Activated CD8-positive, alpha-beta T cell treated with anti-CD3 and anti-CD28 coated beads for 36 hours (primary cell): ENCODE measurements at regions of chr3 and their contacts with region 1.

Region 1: DNA sequence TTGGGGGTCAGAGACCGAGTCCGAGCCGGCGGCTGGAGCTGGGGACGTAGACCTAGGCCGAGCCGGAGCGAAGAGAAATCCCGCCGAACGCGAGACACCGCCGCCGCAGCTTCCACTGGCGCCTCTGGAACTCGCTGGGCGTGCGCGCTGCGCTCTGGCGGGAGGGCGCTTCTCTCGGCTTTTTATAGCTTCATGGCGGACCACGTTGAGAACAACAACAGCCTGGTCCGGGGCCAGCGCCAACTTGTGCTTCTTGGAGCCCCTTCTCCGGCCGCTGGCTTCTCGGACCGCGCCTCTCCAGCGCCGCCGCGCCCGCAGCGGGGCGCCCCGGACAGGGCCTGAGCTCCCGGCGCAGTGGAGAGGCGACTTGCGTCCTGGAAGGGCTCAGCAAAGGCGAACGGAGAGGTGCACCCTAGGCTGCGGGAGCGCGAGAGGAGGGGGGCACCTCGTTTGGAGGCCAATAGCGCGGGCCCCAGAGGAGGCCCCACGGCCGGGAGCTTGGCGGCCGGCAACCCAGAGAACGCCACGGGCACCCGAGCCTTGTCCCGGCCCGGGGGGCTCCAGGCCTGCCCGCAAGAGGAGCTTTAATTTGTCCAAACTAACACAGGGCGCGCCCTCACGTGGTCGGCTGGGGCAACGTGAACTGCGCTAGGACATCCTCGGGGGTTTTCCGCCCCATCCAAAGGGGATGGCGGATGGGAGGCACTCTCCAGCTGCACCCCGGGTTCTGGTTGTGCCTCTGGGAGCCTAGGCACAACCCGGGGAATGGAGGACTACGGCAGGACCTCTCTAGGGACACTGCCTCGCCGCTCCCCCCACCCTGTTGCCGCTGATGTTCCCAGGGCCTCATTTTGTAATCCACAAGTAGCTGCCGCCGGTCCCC is 37.7 kb downstream of the HMCES start:
- DNase-seq: peak; percentile 86
- ATAC-seq: peak; percentile 34
- H3K4me3 Mint-ChIP-seq: peak overlapping the region; percentile 80
- H3K27ac Mint-ChIP-seq: peak overlapping the region; percentile 71
- H3K4me1 Mint-ChIP-seq: peaks cover 24% of the 10 kb centered on the region
- H3K27me3 Mint-ChIP-seq: no peaks in the 10 kb centered on the region
- CTCF ChIP-seq: peak; percentile 75

Region 2: GRCh38 chr3:129120254-129121004 is 195.9 kb before region 1 on chr3:
- CTCF ChIA-PET with region 1: interaction called, 4 read pairs
- POLR2A ChIA-PET with region 1: interaction called, 23 read pairs
- intact Hi-C with region 1: no loop called
- DNase-seq: peak; percentile 98
- ATAC-seq: peak; percentile 63
- H3K4me3 Mint-ChIP-seq: peak overlapping the region; percentile 88
- H3K27ac Mint-ChIP-seq: peak overlapping the region; percentile 90
- H3K4me1 Mint-ChIP-seq: peaks cover 45% of the 10 kb centered on the region
- H3K27me3 Mint-ChIP-seq: no peaks in the 10 kb centered on the region
- CTCF ChIP-seq: no peak

Region 3: DNA sequence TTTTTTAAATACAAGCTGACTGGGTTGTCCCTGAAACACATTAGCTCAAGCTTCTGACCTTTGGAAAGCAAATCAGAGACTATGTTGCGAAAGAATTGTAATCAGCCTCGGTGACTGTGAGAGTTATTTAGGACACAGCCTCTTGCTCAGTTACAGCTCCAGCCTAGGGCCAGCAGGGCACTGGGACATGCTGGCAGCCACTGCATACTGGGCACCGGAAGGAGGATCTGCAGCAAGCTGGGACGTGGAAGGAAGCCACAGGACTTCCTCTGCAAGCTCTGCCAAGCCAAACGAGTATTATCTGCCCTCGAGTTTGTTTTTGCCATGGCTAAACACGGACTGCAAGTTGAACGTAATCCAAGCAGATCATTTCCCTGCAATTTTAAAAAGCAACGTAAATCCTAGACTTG is 91.4 kb before region 1 on chr3:
- CTCF ChIA-PET with region 1: no interaction called
- POLR2A ChIA-PET with region 1: interaction called, 13 read pairs
- intact Hi-C with region 1: no loop called
- DNase-seq: peak; percentile 36
- ATAC-seq: peak; percentile 79
- H3K4me3 Mint-ChIP-seq: peak overlapping the region; percentile 30
- H3K27ac Mint-ChIP-seq: peak overlapping the region; percentile 80
- H3K4me1 Mint-ChIP-seq: peaks cover 8% of the 10 kb centered on the region
- H3K27me3 Mint-ChIP-seq: no peaks in the 10 kb centered on the region
- CTCF ChIP-seq: no peak

Region 4: DNA sequence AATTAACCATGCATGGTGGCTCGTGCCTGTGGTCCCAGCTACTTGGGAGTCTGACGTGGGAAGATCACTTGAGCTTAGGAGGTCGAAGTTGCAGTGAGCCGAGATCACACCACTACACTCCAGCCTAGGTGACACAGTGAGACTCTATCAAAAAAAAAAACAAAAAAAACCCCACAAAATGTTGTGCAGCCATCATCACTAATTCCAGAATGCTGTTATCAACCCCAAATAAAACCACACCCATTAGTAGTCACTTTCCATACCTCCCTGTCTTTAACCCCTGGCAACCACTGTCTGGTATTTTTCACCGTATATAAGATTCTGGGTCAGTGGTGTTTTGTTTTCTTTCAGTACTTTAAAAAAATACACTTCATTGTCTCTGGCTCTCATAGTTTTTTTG is 21.1 kb before region 1 on chr3:
- CTCF ChIA-PET with region 1: interaction called, 3 read pairs
- POLR2A ChIA-PET with region 1: interaction called, 28 read pairs
- intact Hi-C with region 1: no loop called
- DNase-seq: no peak
- ATAC-seq: no peak
- H3K4me3 Mint-ChIP-seq: no peak overlapping the region
- H3K27ac Mint-ChIP-seq: no peak overlapping the region
- H3K4me1 Mint-ChIP-seq: peaks cover 7% of the 10 kb centered on the region
- H3K27me3 Mint-ChIP-seq: no peaks in the 10 kb centered on the region
- CTCF ChIP-seq: no peak

Region 5: DNA sequence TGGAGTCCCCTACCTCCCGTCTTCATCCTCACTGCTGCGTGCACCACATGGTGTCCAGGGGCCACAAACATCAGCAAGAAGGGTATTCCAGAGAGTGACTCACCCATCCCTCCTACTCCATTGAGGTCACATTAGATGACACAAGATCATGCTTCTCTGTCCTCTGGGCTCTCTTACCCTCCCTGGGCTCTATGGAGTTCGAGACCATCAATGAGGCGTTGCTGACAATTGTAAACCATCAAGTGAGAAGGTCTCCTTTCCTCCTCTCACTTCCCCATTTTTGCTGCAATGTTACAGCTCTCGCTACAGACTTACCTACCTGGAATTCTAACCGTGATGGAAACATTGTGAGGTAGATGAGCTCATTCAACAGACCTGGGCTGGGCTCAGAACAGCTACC is 14.0 kb after region 1 on chr3:
- CTCF ChIA-PET with region 1: interaction called, 7 read pairs
- POLR2A ChIA-PET with region 1: interaction called, 19 read pairs
- intact Hi-C with region 1: no loop called
- DNase-seq: no peak
- ATAC-seq: peak; percentile 17
- H3K4me3 Mint-ChIP-seq: no peak overlapping the region
- H3K27ac Mint-ChIP-seq: no peak overlapping the region
- H3K4me1 Mint-ChIP-seq: no peaks in the 10 kb centered on the region
- H3K27me3 Mint-ChIP-seq: no peaks in the 10 kb centered on the region
- CTCF ChIP-seq: no peak

Region 6: DNA sequence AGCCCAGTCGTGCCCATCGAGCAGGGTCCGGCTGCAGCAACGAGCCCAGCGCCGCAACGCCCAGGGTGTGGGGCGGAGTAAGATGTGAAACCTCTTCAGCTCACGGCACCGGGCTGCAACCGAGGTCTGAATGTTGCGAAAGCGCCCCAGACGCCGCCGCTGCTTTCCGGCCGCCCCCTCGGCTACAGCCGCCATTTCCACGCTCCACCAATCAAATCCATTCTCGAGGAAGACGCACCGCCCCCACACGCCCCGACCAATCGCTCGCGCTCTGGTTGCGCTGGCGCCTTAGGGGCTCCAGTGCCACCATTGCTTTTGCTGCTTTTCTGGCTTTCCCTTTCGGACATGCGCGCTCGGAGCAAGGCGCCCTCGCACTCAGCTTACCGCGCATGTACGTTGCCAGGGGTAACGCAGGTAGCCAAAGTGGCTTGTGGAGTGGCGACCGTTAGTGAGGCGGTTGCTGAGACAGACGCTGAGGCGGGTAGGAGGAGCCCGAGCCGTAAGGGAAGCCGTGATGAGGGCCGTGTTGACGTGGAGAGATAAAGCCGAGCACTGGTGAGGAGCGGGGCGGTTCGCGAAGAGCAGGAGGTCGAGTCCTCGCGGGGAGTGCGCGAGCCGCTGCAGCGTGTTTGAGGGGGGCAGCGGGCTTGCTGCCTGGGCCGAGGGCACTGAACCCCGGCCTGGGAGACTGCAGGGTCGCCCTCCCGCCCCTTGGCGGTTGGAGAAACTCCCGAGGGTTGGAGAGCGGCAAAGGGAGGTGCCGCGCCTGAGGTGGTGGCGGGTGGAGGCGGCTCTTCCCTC is 123.6 kb after region 1 on chr3 and contains the starts of genes IFT122 and MBD4:
- CTCF ChIA-PET with region 1: no interaction called
- POLR2A ChIA-PET with region 1: interaction called, 16 read pairs
- intact Hi-C with region 1: no loop called
- DNase-seq: peak; percentile 99
- ATAC-seq: peak; percentile 91
- H3K4me3 Mint-ChIP-seq: peak within 1 kb of the TSS; percentile 83
- H3K27ac Mint-ChIP-seq: peak within 1 kb of the TSS; percentile 89
- H3K4me1 Mint-ChIP-seq: peaks cover 52% of the 10 kb centered on the region
- H3K27me3 Mint-ChIP-seq: no peaks in the 10 kb centered on the region
- CTCF ChIP-seq: no peak
- total RNA-seq, gene IFT122: 18.9 to 20.4 TPM
- total RNA-seq, gene MBD4: 38.9 to 44.5 TPM

Region 7: GRCh38 chr3:129974585-129975037 is 658.2 kb after region 1 on chr3 and contains the start of gene TRH:
- CTCF ChIA-PET with region 1: no interaction called
- POLR2A ChIA-PET with region 1: no interaction called
- intact Hi-C with region 1: no loop called
- DNase-seq: peak; percentile 7
- ATAC-seq: no peak
- H3K4me3 Mint-ChIP-seq: peak within 1 kb of the TSS; percentile 53
- H3K27ac Mint-ChIP-seq: no peak within 1 kb of the TSS
- H3K4me1 Mint-ChIP-seq: peaks cover 7% of the 10 kb centered on the region
- H3K27me3 Mint-ChIP-seq: peaks cover 43% of the 10 kb centered on the region
- CTCF ChIP-seq: no peak
- total RNA-seq, gene TRH: not detected